Psoas muscle (tissue), 8 donors: ENCODE measurements at regions of chr17 and their contacts with region 1.

Region 1: GRCh38 chr17:82639628-82640027 is 8.6 kb downstream of the WDR45B start:
- DNase-seq: no peak
- ATAC-seq: peak in 3 of 4 donors; percentile 26 to 38 (median 32)
- H3K4me3 ChIP-seq: no peak overlapping the region
- H3K27ac ChIP-seq: no peak overlapping the region
- H3K4me1 ChIP-seq: peaks cover 6% of the 10 kb centered on the region
- H3K27me3 ChIP-seq: no peaks in the 10 kb centered on the region
- CTCF ChIP-seq: no peak

Region 2: GRCh38 chr17:82603981-82604448 is 35.6 kb before region 1 on chr17:
- intact Hi-C with region 1: loop called in 1 of 2 experiments (anchors 5 kb)
- DNase-seq: no peak
- ATAC-seq: peak in 3 of 4 donors; percentile 26 to 34 (median 28)
- H3K4me3 ChIP-seq: no peak overlapping the region
- H3K27ac ChIP-seq: no peak overlapping the region
- H3K4me1 ChIP-seq: peaks cover 7% of the 10 kb centered on the region
- H3K27me3 ChIP-seq: no peaks in the 10 kb centered on the region
- CTCF ChIP-seq: no peak

Region 3: GRCh38 chr17:82993005-82993404 is 353.4 kb after region 1 on chr17:
- intact Hi-C with region 1: no loop called
- DNase-seq: no peak
- ATAC-seq: no peak
- H3K4me3 ChIP-seq: no peak overlapping the region
- H3K27ac ChIP-seq: no peak overlapping the region
- H3K4me1 ChIP-seq: no peaks in the 10 kb centered on the region
- H3K27me3 ChIP-seq: no peaks in the 10 kb centered on the region
- CTCF ChIP-seq: no peak